ENCODE measurements at regions of chr10 and their contacts with region 1.

Region 1: DNA sequence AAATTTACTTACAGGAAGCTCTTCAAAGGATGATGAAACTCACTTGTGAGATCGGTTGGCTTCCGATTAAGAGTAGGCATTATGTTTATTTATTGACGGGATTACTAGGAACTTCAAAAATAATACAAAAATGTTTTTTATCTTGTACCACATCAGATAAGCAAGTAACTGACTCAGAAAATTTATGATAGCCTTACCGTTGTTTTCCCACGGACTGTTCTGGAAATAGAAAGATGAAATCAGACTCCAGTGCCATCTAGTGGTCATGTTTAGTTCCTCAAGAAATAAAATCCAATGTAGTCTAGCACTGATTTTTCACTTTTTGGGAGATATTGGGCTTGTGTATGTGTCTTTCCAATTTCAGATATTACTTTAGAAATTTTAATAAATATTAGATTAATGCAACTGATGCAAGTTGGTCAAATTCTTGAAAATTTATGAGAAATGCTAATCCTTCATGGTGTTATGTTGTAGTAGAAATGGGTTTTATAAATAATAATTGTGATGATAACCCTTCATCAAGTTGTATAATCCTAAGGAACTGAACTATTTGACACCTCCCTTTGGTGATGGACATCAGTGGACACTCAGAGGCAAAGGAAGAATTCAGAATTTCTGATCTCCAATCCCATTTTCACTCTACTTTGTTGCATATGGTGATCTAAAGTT is 168.8 kb downstream of the TMEM26 start:
- DNase-seq: peak; percentile 16
- H3K4me3 Mint-ChIP-seq: no peak overlapping the region
- H3K27ac Mint-ChIP-seq: no peak overlapping the region
- H3K4me1 Mint-ChIP-seq: peaks cover 10% of the 10 kb centered on the region
- H3K27me3 Mint-ChIP-seq: no peaks in the 10 kb centered on the region
- CTCF ChIP-seq: peak; percentile 89

Region 2: GRCh38 chr10:60964257-60965235 is 319.8 kb before region 1 on chr10:
- CTCF ChIA-PET with region 1: interaction called, 4 read pairs
- intact Hi-C with region 1: loop called (anchors 5 kb)
- DNase-seq: peak; percentile 79
- H3K4me3 Mint-ChIP-seq: peak overlapping the region; percentile 35
- H3K27ac Mint-ChIP-seq: peak overlapping the region; percentile 84
- H3K4me1 Mint-ChIP-seq: peaks cover 40% of the 10 kb centered on the region
- H3K27me3 Mint-ChIP-seq: no peaks in the 10 kb centered on the region
- CTCF ChIP-seq: peak; percentile 82

Region 3: GRCh38 chr10:60978287-60979115 is 305.9 kb before region 1 on chr10:
- CTCF ChIA-PET with region 1: no interaction called
- intact Hi-C with region 1: loop called (anchors 5 kb)
- DNase-seq: peak; percentile 56
- H3K4me3 Mint-ChIP-seq: peak overlapping the region; percentile 39
- H3K27ac Mint-ChIP-seq: peak overlapping the region; percentile 88
- H3K4me1 Mint-ChIP-seq: peaks cover 68% of the 10 kb centered on the region
- H3K27me3 Mint-ChIP-seq: no peaks in the 10 kb centered on the region
- CTCF ChIP-seq: no peak

Region 4: GRCh38 chr10:61024856-61025600 is 259.3 kb before region 1 on chr10:
- CTCF ChIA-PET with region 1: no interaction called
- intact Hi-C with region 1: loop called (anchors 5 kb)
- DNase-seq: peak; percentile 43
- H3K4me3 Mint-ChIP-seq: no peak overlapping the region
- H3K27ac Mint-ChIP-seq: no peak overlapping the region
- H3K4me1 Mint-ChIP-seq: peaks cover 47% of the 10 kb centered on the region
- H3K27me3 Mint-ChIP-seq: no peaks in the 10 kb centered on the region
- CTCF ChIP-seq: peak; percentile 80

Region 5: GRCh38 chr10:61068471-61068870 is 215.9 kb before region 1 on chr10:
- CTCF ChIA-PET with region 1: no interaction called
- intact Hi-C with region 1: no loop called
- DNase-seq: no peak
- H3K4me3 Mint-ChIP-seq: no peak overlapping the region
- H3K27ac Mint-ChIP-seq: no peak overlapping the region
- H3K4me1 Mint-ChIP-seq: no peaks in the 10 kb centered on the region
- H3K27me3 Mint-ChIP-seq: no peaks in the 10 kb centered on the region
- CTCF ChIP-seq: no peak

Region 6: DNA sequence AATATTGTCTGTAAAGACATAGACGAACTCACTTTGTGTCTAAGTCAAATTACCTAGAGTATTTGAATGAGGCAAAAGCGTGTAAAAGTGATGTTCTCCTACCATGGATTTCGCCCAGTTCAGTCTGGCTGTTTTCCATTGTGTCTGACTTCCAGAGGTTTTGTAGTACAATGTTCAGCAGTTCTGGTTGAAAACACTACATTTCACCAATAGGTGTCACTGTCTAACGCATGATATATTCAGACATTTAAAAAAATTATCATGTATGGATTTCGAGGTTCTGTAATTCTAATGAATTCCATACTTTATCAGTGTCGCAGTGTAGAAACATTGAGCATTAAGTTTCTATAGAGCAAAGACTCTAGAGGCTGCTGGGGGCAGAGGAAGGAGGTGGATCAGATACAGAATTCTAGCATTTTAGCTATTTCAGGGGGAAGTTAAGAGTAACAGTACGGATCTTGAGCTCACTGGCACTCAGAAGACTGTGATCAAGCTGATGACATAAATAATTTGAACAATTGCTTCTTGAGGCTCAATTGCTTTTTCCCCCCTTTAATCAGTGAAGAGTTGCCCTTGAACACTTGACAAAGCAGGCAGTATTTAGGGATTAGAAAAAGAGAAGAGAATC is 143.5 kb before region 1 on chr10:
- CTCF ChIA-PET with region 1: interaction called, 3 read pairs
- intact Hi-C with region 1: loop called (anchors 1 kb)
- DNase-seq: peak; percentile 26
- H3K4me3 Mint-ChIP-seq: no peak overlapping the region
- H3K27ac Mint-ChIP-seq: no peak overlapping the region
- H3K4me1 Mint-ChIP-seq: peaks cover 14% of the 10 kb centered on the region
- H3K27me3 Mint-ChIP-seq: no peaks in the 10 kb centered on the region
- CTCF ChIP-seq: peak; percentile 51

Region 7: DNA sequence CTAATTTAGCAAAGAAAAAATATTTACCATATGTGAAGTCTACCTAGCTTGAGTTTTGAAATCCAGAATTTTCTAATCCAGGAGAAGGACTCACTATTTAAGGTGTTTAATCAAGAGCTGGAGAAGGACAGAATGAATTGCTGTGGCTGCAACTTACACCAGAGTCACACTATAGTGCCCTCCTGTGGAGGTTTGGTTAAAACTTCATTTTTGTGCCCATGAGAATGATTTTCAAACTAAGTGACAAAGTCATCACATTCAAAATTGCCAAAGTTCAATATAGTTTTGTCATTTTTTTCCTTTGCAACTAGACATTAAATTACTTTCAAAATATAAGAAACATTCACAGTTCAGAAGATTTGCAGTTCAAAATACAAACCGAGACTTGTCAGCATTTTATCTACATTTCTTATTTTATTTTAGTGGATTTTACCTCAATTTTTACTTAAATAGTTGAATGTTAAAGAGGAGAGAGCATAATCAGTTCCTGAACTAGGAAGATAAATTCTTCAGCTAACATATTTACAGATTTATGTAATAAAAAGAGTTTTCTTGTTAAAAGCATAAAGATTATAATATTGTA is 449.1 kb after region 1 on chr10:
- CTCF ChIA-PET with region 1: no interaction called
- intact Hi-C with region 1: loop called (anchors 10 kb)
- DNase-seq: peak; percentile 64
- H3K4me3 Mint-ChIP-seq: no peak overlapping the region
- H3K27ac Mint-ChIP-seq: no peak overlapping the region
- H3K4me1 Mint-ChIP-seq: no peaks in the 10 kb centered on the region
- H3K27me3 Mint-ChIP-seq: peaks cover 32% of the 10 kb centered on the region
- CTCF ChIP-seq: no peak

Measured in Calu3 (cell line).